ENCODE measurements at regions of chr22 and their contacts with region 1.

Region 1: DNA sequence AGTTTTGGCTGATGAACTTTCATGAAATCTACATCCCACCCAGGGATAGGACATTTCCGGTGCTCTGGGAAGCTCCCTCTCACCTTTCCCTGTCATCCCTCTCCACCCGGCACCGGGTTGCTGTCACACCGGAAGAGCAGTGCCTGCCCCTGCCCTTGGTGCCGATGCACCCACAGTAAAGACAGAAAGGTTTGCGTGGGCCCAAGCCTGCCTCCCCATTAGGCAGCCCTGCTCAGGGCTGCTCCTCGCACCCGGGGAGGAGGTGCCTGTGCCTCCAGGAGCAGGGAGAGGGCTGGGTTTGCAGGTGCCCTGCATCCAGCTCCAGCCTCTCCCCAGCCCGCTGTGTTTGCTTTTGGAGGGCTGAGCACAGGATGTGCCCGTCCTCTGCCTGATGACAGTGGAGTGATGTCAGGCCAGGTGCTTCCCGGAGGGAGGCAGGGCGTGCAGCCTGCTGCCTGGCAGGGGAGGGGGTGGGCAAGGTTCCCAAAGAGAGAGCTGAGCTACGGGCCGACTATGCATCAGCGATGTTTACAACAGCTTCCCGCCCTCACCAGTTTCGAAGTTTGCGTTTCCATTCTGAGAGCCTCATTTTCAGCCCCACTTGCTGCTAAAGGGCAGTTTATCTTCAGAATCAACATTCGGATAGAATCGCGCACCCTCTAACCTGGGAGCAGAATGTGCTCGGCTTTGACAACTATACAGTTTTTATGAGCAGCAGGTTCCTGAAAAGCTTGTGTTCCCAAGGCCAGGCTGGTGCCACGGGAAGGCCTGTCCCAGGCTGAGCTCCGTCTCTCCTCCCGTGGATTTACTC is 83.2 kb upstream of the CLDN5 start:
- ATAC-seq: peak; percentile 57 to 91 (median 81)
- H3K4me3 ChIP-seq: no peak overlapping the region
- H3K27ac ChIP-seq: peak overlapping the region in 1 of 2 donors; percentile 65
- H3K4me1 ChIP-seq: peaks cover 0 to 15% of the 10 kb centered on the region in 2 donors

Region 2: DNA sequence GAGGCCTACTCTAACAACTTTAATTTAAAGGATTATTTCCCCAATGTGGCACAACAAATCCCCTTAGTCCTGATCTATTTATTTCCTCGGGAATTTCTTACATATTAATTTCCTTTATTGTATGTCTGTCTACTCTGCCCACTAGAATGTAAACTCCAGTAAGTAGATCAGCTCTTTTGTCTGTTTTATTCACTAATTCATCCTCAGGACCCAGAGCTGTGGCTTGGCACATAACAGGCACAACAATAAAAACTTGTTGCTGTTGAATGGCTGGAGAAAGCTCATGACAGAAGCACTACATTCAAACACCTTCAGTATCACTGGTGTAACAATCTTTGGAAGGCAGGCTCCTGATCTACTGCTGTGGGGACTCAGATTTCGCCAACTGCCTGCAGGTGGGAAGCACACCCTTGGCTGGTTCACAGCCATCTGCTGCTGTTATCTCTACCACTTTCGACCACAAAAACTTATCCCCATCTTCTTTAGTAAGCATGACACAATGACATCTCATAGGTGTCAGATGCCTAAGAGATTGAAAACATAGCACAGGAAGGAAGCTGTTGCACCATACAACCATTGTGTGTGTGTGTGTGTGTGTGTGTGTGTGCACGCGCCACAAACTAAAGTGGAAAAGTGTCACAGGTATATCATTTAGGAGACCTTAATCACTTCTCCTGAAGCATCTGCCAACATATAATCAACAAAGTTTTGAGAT is 187.8 kb before region 1 on chr22:
- in situ Hi-C with region 1: no loop called
- ATAC-seq: no peak
- H3K4me3 ChIP-seq: no peak overlapping the region
- H3K27ac ChIP-seq: peak overlapping the region in 1 of 2 donors; percentile 48
- H3K4me1 ChIP-seq: no peaks in the 10 kb centered on the region

Region 3: DNA sequence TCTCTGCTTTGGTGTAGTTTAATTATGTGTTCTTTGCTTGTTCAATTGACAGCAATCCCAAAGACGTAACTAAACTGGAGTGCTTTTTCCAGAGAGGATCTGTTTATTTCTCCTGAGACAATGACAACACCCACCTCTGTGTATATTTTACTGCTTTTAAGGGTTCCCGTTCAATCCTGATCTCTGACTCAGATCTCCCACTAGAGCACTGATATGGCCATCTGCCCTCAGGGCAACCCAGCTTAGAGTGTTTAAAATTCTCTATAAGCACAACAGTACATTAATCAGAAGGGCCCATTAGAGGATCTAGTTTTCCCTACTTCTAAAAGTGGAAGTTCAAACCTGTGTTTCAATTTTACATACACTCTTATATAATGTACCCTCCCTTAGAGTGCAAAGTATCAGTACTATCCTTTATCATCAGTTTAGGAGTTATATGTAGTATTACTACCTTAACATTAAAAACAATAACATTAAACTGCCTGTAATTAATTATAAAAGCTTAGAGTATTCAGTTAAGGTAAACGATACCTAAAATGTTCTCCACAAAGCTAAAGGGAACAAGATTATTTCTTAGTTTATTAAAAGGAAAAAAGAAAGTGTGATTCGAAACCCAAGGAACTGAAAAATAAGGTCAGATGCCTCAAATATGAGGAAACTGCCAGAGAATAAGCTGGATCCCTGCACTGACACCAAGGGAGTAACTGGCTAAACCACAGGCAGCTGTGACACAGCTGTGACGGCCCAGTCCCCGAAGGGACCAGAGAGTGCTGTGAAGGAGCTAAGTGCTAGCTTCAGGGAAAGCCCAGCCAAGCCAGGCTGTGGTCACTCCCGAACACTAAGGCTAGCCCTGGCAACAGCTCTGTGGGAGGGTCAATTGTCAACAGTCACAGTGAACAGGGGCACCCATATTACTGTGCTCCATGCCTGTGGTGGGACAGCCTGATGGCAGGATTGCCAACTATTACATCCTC is 143.6 kb before region 1 on chr22:
- in situ Hi-C with region 1: loop called in 1 of 9 experiments (anchors 25 kb)
- ATAC-seq: peak in 7 of 8 experiments; percentile 43 to 91 (median 61)
- H3K4me3 ChIP-seq: no peak overlapping the region
- H3K27ac ChIP-seq: peak overlapping the region in 1 of 2 donors; percentile 46
- H3K4me1 ChIP-seq: no peaks in the 10 kb centered on the region